Calu3 (cell line): ENCODE measurements at regions of chr1 and their contacts with region 1.

Region 1: GRCh38 chr1:59759156-59759925 is 55.4 kb upstream of the HOOK1 start:
- DNase-seq: peak; percentile 83
- H3K4me3 Mint-ChIP-seq: peak overlapping the region; percentile 16
- H3K27ac Mint-ChIP-seq: no peak overlapping the region
- H3K4me1 Mint-ChIP-seq: peaks cover 8% of the 10 kb centered on the region
- H3K27me3 Mint-ChIP-seq: no peaks in the 10 kb centered on the region
- CTCF ChIP-seq: peak; percentile 91

Region 2: GRCh38 chr1:58664881-58665280 is 1094.5 kb before region 1 on chr1:
- CTCF ChIA-PET with region 1: interaction called, 6 read pairs
- intact Hi-C with region 1: loop called (anchors 5 kb)
- DNase-seq: no peak
- H3K4me3 Mint-ChIP-seq: no peak overlapping the region
- H3K27ac Mint-ChIP-seq: no peak overlapping the region
- H3K4me1 Mint-ChIP-seq: peaks cover 4% of the 10 kb centered on the region
- H3K27me3 Mint-ChIP-seq: no peaks in the 10 kb centered on the region
- CTCF ChIP-seq: no peak

Region 3: DNA sequence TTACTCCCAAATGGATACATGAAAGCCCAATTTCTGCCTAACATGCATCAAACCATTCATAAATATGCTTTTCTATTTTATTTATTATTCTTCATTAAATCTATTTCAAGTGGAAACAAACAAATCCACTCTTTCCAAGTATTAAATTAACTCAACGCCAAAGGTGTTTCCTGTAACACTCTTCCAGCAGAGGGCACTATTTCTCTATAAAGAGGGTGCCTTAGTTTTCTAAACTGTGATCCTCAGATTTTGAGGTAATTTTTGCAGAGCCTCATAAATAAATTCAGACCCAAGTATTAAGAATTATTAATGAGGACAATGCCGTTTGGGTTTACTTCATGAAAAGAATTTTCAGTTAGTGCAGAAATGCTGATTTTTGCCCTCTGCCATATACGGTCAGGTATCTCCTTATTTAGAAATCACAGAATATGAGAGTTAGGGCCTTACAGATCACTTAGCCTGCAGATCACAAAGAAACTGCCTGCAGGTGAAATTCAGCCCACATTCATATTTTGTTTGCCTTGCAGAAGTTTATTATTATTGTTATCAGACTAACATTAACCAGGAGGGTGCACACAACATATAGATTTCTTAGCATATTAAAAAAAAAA is 1019.4 kb before region 1 on chr1:
- CTCF ChIA-PET with region 1: no interaction called
- intact Hi-C with region 1: loop called (anchors 2 kb)
- DNase-seq: peak; percentile 46
- H3K4me3 Mint-ChIP-seq: no peak overlapping the region
- H3K27ac Mint-ChIP-seq: no peak overlapping the region
- H3K4me1 Mint-ChIP-seq: no peaks in the 10 kb centered on the region
- H3K27me3 Mint-ChIP-seq: no peaks in the 10 kb centered on the region
- CTCF ChIP-seq: peak; percentile 74